Pancreas (tissue), 10 donors: ENCODE measurements at regions of chr4 and their contacts with region 1.

Region 1: GRCh38 chr4:87375719-87376291 is 15.2 kb downstream of the HSD17B11 start:
- DNase-seq: peak in 4 of 6 donors; percentile 28 to 47 (median 39)
- ATAC-seq: peak; percentile 88 to 99 (median 96)
- H3K4me3 ChIP-seq: no peak overlapping the region
- H3K27ac ChIP-seq: no peak overlapping the region
- H3K4me1 ChIP-seq: peaks cover 0 to 8% (median 3%) of the 10 kb centered on the region in 3 donors
- H3K27me3 ChIP-seq: no peaks in the 10 kb centered on the region
- CTCF ChIP-seq: peak in 3 of 4 donors; percentile 52 to 63 (median 61)

Region 2: GRCh38 chr4:87451537-87451936 is 75.7 kb after region 1 on chr4:
- intact Hi-C with region 1: loop called in 1 of 3 experiments (anchors 10 kb)
- DNase-seq: no peak
- ATAC-seq: no peak
- H3K4me3 ChIP-seq: no peak overlapping the region
- H3K27ac ChIP-seq: no peak overlapping the region
- H3K4me1 ChIP-seq: peaks cover 0 to 3% (median 0%) of the 10 kb centered on the region in 3 donors
- H3K27me3 ChIP-seq: no peaks in the 10 kb centered on the region
- CTCF ChIP-seq: no peak